ENCODE measurements at regions of chr20 and their contacts with region 1.

Region 1: DNA sequence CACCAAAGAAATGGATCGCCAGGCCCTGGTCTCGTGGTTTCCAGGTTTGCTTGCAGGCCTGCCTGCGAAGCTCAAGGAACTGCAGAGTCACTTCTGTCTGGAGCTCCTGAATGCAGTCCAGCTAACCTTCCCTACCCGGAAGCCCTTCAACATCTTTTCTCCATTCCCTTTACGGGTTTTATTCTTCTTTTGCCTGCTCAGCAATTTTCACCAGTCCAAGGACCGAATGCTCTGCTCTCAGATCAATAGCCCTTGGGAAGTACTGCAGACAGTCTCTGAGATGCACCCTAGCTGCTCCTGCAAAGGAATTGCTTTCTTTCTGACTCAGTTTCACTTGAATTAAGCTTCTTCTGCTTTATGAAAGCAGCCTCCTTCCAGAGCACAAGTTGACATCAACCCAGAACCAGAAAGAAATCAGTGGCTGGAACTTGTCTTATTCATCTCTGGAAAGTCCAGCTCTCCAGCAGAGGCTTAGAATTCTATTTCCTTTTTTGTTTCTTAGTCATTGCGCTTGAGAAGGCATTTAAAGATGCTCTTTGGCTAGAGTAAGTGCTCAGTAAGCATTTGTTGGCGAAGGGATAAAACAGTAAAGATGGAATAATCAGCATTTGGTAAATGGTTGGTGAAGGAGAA is 18.7 kb upstream of the YWHAB start:
- DNase-seq: no peak
- ATAC-seq: no peak
- H3K4me3 ChIP-seq: no peak overlapping the region
- H3K27ac ChIP-seq: no peak overlapping the region
- H3K4me1 ChIP-seq: no peaks in the 10 kb centered on the region
- H3K27me3 ChIP-seq: no peaks in the 10 kb centered on the region
- CTCF ChIP-seq: no peak
- POLR2A ChIP-seq: no peak
- RAD21 ChIP-seq: no peak

Region 2: DNA sequence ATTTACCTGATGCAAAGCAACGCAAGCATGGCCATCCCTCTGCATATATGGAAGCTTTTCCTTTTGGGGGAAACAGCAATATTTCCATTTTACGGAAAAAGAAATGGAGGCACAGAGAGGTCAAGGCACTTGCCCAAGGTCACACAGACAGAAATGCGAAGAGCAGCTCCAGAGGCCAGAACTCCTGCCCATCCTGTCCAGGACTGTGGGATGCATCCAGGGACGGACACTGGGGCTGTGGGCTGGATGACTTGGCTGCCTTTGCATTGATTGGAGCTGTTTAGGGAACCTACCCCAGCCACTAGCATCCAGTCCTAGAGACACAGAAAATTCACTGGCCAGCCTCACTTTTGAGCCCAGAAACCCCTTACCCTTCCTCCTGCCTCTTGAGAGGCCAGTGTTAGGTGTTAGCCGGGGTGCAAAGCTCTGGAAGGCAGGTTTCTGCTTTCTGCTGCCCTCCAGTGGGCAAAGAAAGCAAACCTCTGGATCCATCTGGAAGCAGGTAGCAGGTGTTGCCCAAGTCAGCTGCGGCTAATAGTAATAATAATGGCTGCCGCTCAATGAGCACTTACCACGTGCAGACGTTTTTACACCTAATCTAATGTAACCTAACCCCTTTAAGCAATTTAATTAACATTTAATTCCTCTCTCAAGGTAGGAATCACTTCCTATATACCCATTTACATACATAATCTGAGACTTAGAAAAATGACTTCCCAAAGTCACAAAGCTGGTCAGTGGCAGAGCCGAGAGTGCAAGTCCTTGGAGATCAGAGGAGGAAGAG is 183.4 kb before region 1 on chr20:
- CTCF ChIA-PET with region 1: interaction called, 8 read pairs
- POLR2A ChIA-PET with region 1: no interaction called
- RAD21 ChIA-PET with region 1: no interaction called
- intact Hi-C with region 1: loop called (anchors 1 kb)
- DNase-seq: peak; percentile 59
- ATAC-seq: peak; percentile 91
- H3K4me3 ChIP-seq: no peak overlapping the region
- H3K27ac ChIP-seq: no peak overlapping the region
- H3K4me1 ChIP-seq: peaks cover 3 to 22% of the 10 kb centered on the region in 2 experiments
- H3K27me3 ChIP-seq: no peaks in the 10 kb centered on the region
- CTCF ChIP-seq: peak; percentile 63 to 79 (median 77); a peak in 5 of 6 replicates
- POLR2A ChIP-seq: no peak
- RAD21 ChIP-seq: peak; percentile 79

Region 3: DNA sequence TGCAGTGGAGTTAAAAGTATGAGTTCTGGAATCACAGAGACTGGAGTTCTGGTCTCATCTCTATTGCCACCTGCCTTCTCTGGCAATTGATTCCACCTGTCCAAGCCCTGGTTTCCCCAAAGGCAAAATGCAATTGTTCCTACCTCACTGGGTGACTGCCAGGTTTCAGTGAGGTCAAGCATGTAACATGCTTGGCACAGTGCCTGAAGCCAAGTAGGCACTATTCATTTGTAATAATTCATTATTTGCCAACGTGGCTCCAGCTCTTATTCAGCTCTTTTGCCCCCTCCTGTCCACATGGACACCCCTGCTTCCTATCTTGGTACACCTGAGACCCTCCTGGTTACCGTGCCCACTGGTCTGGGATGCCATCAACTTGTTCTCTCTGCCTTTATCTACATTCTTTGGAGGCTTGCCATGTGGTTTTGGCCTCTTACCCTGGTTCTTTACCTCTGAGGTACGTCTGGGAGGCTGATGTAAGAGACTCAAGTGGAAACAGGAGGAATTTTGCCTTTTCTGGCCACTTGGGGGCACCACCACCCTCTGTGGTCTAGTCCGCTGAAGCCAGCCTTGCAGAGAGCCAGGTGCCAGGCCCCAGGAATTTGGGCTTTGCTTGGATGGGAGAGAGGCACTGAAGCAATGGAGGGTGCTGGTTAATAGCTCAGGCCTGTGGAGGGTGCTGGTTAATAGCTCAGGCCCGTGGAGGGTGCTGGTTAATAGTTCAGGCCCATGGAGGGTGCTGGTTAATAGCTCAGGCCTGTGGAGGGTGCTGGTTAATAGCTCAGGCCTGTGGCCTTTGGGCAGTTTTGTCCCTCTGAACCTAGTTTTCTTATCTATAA is 119.4 kb before region 1 on chr20:
- CTCF ChIA-PET with region 1: interaction called, 20 read pairs
- POLR2A ChIA-PET with region 1: interaction called, 4 read pairs
- RAD21 ChIA-PET with region 1: interaction called, 4 to 7 read pairs
- intact Hi-C with region 1: loop called (anchors 1 kb)
- DNase-seq: peak; percentile 89
- ATAC-seq: peak; percentile 92
- H3K4me3 ChIP-seq: no peak overlapping the region
- H3K27ac ChIP-seq: no peak overlapping the region
- H3K4me1 ChIP-seq: peaks cover 8 to 12% of the 10 kb centered on the region in 2 experiments; a peak in 3 of 4 replicates
- H3K27me3 ChIP-seq: no peaks in the 10 kb centered on the region
- CTCF ChIP-seq: peak; percentile 78 to 88 (median 83)
- POLR2A ChIP-seq: no peak
- RAD21 ChIP-seq: peak; percentile 78

Region 4: DNA sequence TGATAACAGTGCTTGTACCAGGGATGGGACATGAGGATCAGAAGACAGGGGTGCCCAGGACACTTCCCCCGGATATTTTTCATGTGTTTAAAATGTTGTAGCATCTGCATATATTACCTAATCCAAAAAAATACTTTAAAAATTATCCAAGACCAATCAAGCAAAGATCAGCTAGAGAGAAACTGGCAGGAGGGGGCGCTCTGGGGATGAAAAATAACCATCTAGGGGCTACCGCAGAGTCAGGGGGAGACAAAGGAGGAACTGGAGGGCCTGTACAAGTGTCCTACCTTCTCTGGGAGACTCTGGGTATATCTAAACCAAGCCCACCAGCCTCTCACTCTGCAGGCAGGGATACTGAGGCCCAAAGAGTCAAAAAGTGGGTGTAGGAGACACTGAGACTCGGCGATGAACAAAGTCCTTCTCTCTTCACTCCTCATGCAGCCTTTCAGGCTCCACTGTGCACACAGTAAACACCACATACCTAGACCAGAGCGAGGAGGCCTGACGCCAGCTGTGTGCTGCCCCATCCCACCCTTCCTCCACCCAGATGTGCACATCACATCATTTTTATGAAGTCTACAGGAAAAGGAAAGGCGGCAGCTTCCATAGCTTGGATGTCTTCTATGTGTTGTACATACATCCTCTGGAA is 66.3 kb before region 1 on chr20:
- CTCF ChIA-PET with region 1: interaction called, 4 read pairs
- POLR2A ChIA-PET with region 1: no interaction called
- RAD21 ChIA-PET with region 1: no interaction called
- intact Hi-C with region 1: loop called (anchors 1 kb)
- DNase-seq: no peak
- ATAC-seq: peak; percentile 72
- H3K4me3 ChIP-seq: no peak overlapping the region
- H3K27ac ChIP-seq: no peak overlapping the region
- H3K4me1 ChIP-seq: no peaks in the 10 kb centered on the region
- H3K27me3 ChIP-seq: peaks cover 8% of the 10 kb centered on the region; the same call in 1 of the 2 replicates
- CTCF ChIP-seq: peak; percentile 51 to 68 (median 51); a peak in 5 of 6 replicates
- POLR2A ChIP-seq: no peak
- RAD21 ChIP-seq: peak; percentile 54; the same call in 1 of the 2 replicates

Measured in HCT116 (cell line).